GM10248 (cell line): ENCODE measurements at regions of chr1 and their contacts with region 1.

Region 1: GRCh38 chr1:89780721-89781120 is 40.1 kb upstream of the LRRC8D start:
- DNase-seq: no peak
- CTCF ChIP-seq: no peak

Region 2: DNA sequence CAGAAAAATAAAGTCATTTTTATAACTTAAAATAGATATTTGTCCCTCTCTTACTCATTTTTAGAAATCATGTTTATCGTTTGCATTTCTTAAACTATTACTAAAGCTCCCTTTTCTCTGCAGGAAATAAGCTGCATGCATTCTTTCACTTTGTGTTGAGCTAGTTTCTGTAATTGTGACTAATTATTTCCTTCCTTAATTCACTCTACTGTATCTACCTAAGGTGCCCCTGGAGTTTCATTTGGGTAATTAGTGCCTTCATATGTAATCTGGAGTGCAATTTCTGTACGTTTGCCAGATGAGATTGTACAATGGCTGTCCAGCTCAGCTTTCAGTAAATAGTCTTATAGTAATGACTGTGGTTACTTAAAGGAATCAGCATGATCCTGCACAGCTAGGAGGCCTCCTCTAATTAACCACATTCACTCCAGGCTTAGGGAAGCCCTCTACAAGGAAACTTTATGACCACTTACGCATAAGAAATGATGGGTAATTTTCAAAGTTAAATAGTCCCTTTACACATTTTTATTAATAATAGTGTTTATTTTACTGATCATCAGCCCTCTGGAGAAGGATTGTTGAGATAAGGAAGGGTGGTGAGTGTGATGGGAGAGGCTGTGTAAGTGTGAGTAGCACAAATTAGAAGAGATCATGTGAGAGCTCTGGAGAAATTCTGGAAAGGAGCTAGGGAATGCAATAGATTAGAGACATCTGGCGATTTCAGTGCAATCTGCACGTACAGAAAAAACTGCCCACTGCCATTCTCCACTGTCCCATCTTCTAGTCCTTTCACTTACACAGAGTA is 61.0 kb before region 1 on chr1:
- CTCF ChIA-PET with region 1: no interaction called
- POLR2A ChIA-PET with region 1: no interaction called
- DNase-seq: peak; percentile 39
- CTCF ChIP-seq: no peak

Region 3: GRCh38 chr1:89794406-89794805 is 13.7 kb after region 1 on chr1:
- CTCF ChIA-PET with region 1: interaction called, 17 read pairs
- POLR2A ChIA-PET with region 1: no interaction called
- DNase-seq: no peak
- CTCF ChIP-seq: no peak